Right ventricle myocardium inferior (tissue), 1 donor: ENCODE measurements at regions of chr15 and their contacts with region 1.

Region 1: DNA sequence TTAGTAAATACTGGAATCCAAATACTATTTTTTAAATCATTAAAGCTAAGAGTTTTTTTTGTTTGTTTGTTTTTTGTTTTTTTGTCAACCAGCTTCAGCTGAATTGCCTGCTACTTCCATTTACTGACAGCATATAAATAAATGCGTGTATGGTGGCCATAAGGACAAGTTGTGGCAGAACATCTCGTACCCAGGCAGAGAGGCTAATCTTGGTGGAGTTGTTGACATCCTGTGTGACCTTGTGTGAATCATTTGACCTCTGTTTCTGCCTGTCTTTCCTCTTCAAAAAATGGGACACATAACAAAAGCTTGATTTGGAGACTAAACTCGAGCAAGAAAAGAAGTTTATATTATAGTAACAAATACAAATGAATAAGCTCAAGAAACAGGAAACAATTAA is 734.2 kb downstream of the MCTP2 start:
- DNase-seq: no peak
- ATAC-seq: no peak

Region 2: GRCh38 chr15:95078003-95078402 is 112.4 kb after region 1 on chr15:
- intact Hi-C with region 1: loop called (anchors 5 kb)
- DNase-seq: no peak
- ATAC-seq: no peak